ENCODE measurements at regions of chr12 and their contacts with region 1.

Region 1: GRCh38 chr12:103571286-103571685 is 15.8 kb upstream of the STAB2 start:
- DNase-seq: no peak
- ATAC-seq: no peak
- H3K4me3 Mint-ChIP-seq: no peak overlapping the region
- H3K27ac Mint-ChIP-seq: no peak overlapping the region
- H3K4me1 Mint-ChIP-seq: peaks cover 6% of the 10 kb centered on the region
- H3K27me3 Mint-ChIP-seq: peaks cover 71% of the 10 kb centered on the region
- CTCF ChIP-seq: no peak

Region 2: GRCh38 chr12:103114296-103115055 is 456.8 kb before region 1 on chr12:
- CTCF ChIA-PET with region 1: no interaction called
- POLR2A ChIA-PET with region 1: no interaction called
- intact Hi-C with region 1: no loop called
- DNase-seq: no peak
- ATAC-seq: peak; percentile 79
- H3K4me3 Mint-ChIP-seq: peak overlapping the region; percentile 20
- H3K27ac Mint-ChIP-seq: no peak overlapping the region
- H3K4me1 Mint-ChIP-seq: peaks cover 14% of the 10 kb centered on the region
- H3K27me3 Mint-ChIP-seq: no peaks in the 10 kb centered on the region
- CTCF ChIP-seq: no peak

Region 3: DNA sequence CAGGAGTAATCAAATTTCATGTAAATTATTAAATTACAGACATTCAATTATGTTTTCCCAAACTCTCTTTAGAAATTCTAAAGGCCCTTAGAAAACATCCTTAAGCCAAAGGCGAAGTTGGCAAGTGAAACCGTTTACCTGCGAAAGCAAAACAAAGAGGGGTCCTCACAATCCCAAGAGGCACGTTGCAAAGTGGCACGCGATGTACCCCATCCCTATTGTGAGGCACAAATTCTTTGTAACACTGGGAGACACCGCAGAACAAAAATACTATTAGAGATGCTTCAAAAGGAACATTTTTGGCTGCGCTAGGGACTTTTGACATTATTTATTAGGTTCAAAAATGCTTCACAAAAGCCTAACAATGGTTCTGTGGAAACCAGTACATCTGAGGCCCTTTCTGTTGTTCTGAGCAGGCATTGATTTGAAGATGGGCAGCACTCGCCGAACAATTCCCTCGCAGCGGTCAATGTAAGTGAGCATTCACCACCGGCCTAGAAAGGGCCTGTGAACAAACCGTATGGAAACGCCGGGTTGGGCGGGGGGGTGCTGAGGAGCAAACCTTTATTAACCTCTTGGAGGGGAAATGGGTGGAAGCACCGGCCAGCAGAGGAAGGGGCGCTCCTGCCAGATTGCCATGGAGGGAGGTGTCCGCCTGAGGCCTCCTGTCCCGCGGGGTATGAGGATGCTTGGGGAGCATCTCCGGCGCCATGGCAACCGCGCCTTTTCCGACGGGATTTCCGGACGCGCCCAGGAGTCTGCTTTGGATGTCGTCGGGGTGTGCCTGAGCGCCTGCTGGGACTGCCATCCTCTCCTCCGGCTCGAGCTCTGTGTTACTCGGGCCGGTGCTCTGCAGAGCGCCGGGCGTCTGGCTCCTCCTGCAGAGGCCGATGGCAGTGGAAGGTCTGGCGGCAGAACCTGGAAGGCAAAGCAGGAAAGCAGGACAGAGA is 269.4 kb before region 1 on chr12:
- CTCF ChIA-PET with region 1: no interaction called
- POLR2A ChIA-PET with region 1: no interaction called
- intact Hi-C with region 1: no loop called
- DNase-seq: no peak
- ATAC-seq: no peak
- H3K4me3 Mint-ChIP-seq: no peak overlapping the region
- H3K27ac Mint-ChIP-seq: no peak overlapping the region
- H3K4me1 Mint-ChIP-seq: peaks cover 11% of the 10 kb centered on the region
- H3K27me3 Mint-ChIP-seq: no peaks in the 10 kb centered on the region
- CTCF ChIP-seq: no peak

Region 4: GRCh38 chr12:103530307-103531066 is 40.8 kb before region 1 on chr12:
- CTCF ChIA-PET with region 1: no interaction called
- POLR2A ChIA-PET with region 1: no interaction called
- intact Hi-C with region 1: no loop called
- DNase-seq: no peak
- ATAC-seq: peak; percentile 80
- H3K4me3 Mint-ChIP-seq: peak overlapping the region; percentile 58
- H3K27ac Mint-ChIP-seq: peak overlapping the region; percentile 72
- H3K4me1 Mint-ChIP-seq: peaks cover 25% of the 10 kb centered on the region
- H3K27me3 Mint-ChIP-seq: no peaks in the 10 kb centered on the region
- CTCF ChIP-seq: no peak

Region 5: GRCh38 chr12:103715494-103715893 is 144.2 kb after region 1 on chr12:
- CTCF ChIA-PET with region 1: no interaction called
- POLR2A ChIA-PET with region 1: no interaction called
- intact Hi-C with region 1: no loop called
- DNase-seq: no peak
- ATAC-seq: no peak
- H3K4me3 Mint-ChIP-seq: no peak overlapping the region
- H3K27ac Mint-ChIP-seq: no peak overlapping the region
- H3K4me1 Mint-ChIP-seq: no peaks in the 10 kb centered on the region
- H3K27me3 Mint-ChIP-seq: peaks cover 18% of the 10 kb centered on the region
- CTCF ChIP-seq: no peak

Region 6: DNA sequence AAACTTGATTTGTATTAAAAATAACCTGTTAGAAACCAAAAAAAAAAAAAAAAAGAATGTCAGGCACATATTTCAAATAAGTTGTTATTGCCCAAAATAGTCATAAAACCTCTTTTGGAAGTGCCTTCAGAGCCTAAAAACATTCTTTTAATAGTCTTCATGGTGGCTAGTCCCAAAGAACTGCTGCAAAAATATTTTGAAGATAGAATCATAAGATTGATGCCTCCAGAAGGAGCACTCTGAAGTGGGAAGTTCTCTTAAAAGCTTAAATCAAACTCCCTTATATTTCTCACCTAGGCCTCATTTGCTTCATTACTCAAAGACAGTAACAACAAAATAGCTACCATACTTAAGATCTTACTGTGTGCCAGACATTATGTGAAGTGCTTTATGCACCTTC is 296.9 kb after region 1 on chr12:
- CTCF ChIA-PET with region 1: interaction called, 6 read pairs
- POLR2A ChIA-PET with region 1: no interaction called
- intact Hi-C with region 1: loop called (anchors 1 kb)
- DNase-seq: no peak
- ATAC-seq: no peak
- H3K4me3 Mint-ChIP-seq: no peak overlapping the region
- H3K27ac Mint-ChIP-seq: no peak overlapping the region
- H3K4me1 Mint-ChIP-seq: no peaks in the 10 kb centered on the region
- H3K27me3 Mint-ChIP-seq: no peaks in the 10 kb centered on the region
- CTCF ChIP-seq: no peak